CD8-positive, alpha-beta T cell (primary cell): ENCODE measurements at regions of chr12 and their contacts with region 1.

Region 1: DNA sequence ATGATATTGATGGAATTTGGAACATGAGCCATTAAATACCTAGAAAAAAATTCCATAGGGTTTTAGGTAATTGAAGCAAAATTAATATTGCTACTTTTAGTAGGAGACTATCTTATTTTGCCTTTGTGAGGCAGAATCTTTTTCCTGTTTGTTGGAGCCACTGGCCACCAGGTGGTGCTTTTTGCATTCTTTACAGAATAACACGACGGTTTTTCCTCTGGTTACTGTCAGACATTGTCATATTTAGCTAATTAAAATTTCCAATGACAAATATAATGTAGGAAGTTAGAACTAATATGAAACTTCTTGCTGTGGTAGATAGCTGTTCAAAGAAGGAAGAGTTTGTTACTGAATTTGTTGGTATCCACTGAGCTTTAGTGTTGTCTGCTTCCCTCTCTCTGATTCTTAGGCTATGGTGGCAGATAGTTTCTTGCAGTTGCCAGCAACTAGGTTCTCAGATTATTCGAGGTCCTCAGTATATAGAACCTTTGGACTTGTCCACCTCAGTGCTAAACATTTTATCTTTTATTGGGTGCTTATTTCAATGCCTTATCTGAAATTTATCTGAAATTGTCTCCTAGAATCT is 25.7 kb downstream of the RAB21 start:
- DNase-seq: peak in 8 of 9 experiments; percentile 16 to 65 (median 51)
- ATAC-seq: peak; percentile 48
- H3K4me3 ChIP-seq: no peak overlapping the region
- H3K4me3 Mint-ChIP-seq: no peak overlapping the region
- H3K27ac ChIP-seq: peak overlapping the region in 1 of 2 experiments; percentile 39
- H3K27ac Mint-ChIP-seq: peak overlapping the region; percentile 66
- H3K4me1 ChIP-seq: no peaks in the 10 kb centered on the region
- H3K4me1 Mint-ChIP-seq: peaks cover 11% of the 10 kb centered on the region
- H3K27me3 ChIP-seq: no peaks in the 10 kb centered on the region
- H3K27me3 Mint-ChIP-seq: no peaks in the 10 kb centered on the region
- CTCF ChIP-seq: peak; percentile 78

Region 2: DNA sequence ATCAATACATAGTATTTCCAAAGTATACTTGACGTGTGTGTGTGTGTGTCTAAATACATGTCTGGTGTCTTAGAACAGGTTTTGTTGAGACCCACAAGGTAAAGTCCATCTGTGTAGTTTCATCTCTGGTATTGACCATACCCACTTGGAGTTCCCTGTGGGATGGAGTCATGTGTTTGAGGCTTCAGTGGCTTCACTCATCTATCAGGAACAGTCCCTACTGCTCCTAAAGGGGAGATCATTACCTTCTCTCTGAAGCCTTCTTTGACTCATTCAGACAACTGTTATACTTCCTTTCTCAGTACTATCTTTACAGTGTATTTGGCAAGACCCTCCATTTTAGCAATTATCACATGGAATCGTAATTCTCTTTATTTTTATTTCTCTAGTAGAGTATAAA is 11.4 kb before region 1 on chr12:
- CTCF ChIA-PET with region 1: interaction called, 15 read pairs
- POLR2A ChIA-PET with region 1: no interaction called
- intact Hi-C with region 1: no loop called
- DNase-seq: no peak
- ATAC-seq: no peak
- H3K4me3 ChIP-seq: no peak overlapping the region
- H3K4me3 Mint-ChIP-seq: no peak overlapping the region
- H3K27ac ChIP-seq: no peak overlapping the region
- H3K27ac Mint-ChIP-seq: peak overlapping the region; percentile 49
- H3K4me1 ChIP-seq: peaks cover 36% of the 10 kb centered on the region
- H3K4me1 Mint-ChIP-seq: peaks cover 58% of the 10 kb centered on the region
- H3K27me3 ChIP-seq: no peaks in the 10 kb centered on the region
- H3K27me3 Mint-ChIP-seq: no peaks in the 10 kb centered on the region
- CTCF ChIP-seq: no peak

Region 3: GRCh38 chr12:71840231-71840847 is 60.0 kb after region 1 on chr12:
- CTCF ChIA-PET with region 1: interaction called, 28 read pairs
- POLR2A ChIA-PET with region 1: interaction called, 6 read pairs
- intact Hi-C with region 1: no loop called
- DNase-seq: peak in 3 of 9 experiments; percentile 8 to 39 (median 18)
- ATAC-seq: peak; percentile 21
- H3K4me3 ChIP-seq: peak overlapping the region; percentile 64 to 79
- H3K4me3 Mint-ChIP-seq: peak overlapping the region; percentile 92
- H3K27ac ChIP-seq: peak overlapping the region; percentile 93 to 98
- H3K27ac Mint-ChIP-seq: peak overlapping the region; percentile 98
- H3K4me1 ChIP-seq: peaks cover 32% of the 10 kb centered on the region
- H3K4me1 Mint-ChIP-seq: peaks cover 46% of the 10 kb centered on the region
- H3K27me3 ChIP-seq: no peaks in the 10 kb centered on the region
- H3K27me3 Mint-ChIP-seq: no peaks in the 10 kb centered on the region
- CTCF ChIP-seq: no peak

Region 4: DNA sequence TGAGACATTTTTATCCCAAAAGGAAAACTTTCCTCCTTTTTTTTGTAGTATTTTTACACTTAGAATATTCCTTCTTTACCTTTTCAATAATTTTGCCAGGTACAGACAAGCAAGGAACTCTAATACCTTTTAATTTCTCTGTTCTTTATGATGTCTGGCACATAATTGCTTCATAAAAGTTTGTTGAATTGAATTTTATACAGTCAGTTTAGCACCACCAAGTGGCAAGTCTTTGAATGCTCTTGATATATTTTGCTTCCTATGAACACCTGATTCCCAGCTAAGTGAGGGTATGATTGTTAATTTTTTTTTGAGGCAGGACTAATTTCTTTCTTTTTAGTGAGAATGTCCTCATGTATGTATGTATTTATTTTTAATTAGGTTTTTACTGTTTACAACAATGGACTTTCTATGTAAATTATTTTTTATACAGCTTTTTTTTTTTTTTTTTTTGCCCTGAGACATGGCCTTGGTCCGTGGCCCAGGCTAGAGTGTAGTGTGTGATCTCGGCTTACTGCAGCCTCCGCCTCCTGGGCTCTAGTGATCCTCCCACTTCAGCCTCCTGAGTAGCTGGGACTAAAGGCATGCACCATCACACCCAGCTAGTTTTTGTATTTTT is 66.1 kb after region 1 on chr12:
- CTCF ChIA-PET with region 1: interaction called, 28 read pairs
- POLR2A ChIA-PET with region 1: no interaction called
- intact Hi-C with region 1: loop called (anchors 1 kb)
- DNase-seq: peak in 2 of 9 experiments; percentile 51 to 64
- ATAC-seq: peak; percentile 69
- H3K4me3 ChIP-seq: no peak overlapping the region
- H3K4me3 Mint-ChIP-seq: no peak overlapping the region
- H3K27ac ChIP-seq: no peak overlapping the region
- H3K27ac Mint-ChIP-seq: no peak overlapping the region
- H3K4me1 ChIP-seq: peaks cover 11% of the 10 kb centered on the region
- H3K4me1 Mint-ChIP-seq: peaks cover 38% of the 10 kb centered on the region
- H3K27me3 ChIP-seq: no peaks in the 10 kb centered on the region
- H3K27me3 Mint-ChIP-seq: no peaks in the 10 kb centered on the region
- CTCF ChIP-seq: peak; percentile 51

Region 5: GRCh38 chr12:71900091-71900490 is 119.8 kb after region 1 on chr12:
- CTCF ChIA-PET with region 1: interaction called, 4 read pairs
- POLR2A ChIA-PET with region 1: no interaction called
- intact Hi-C with region 1: loop called in 1 of 2 experiments (anchors 10 kb)
- DNase-seq: no peak
- ATAC-seq: no peak
- H3K4me3 ChIP-seq: no peak overlapping the region
- H3K4me3 Mint-ChIP-seq: no peak overlapping the region
- H3K27ac ChIP-seq: no peak overlapping the region
- H3K27ac Mint-ChIP-seq: no peak overlapping the region
- H3K4me1 ChIP-seq: no peaks in the 10 kb centered on the region
- H3K4me1 Mint-ChIP-seq: no peaks in the 10 kb centered on the region
- H3K27me3 ChIP-seq: no peaks in the 10 kb centered on the region
- H3K27me3 Mint-ChIP-seq: no peaks in the 10 kb centered on the region
- CTCF ChIP-seq: no peak

Region 6: GRCh38 chr12:71947645-71948105 is 167.3 kb after region 1 on chr12:
- CTCF ChIA-PET with region 1: no interaction called
- POLR2A ChIA-PET with region 1: no interaction called
- intact Hi-C with region 1: no loop called
- DNase-seq: no peak
- ATAC-seq: no peak
- H3K4me3 ChIP-seq: no peak overlapping the region
- H3K4me3 Mint-ChIP-seq: no peak overlapping the region
- H3K27ac ChIP-seq: no peak overlapping the region
- H3K27ac Mint-ChIP-seq: no peak overlapping the region
- H3K4me1 ChIP-seq: no peaks in the 10 kb centered on the region
- H3K4me1 Mint-ChIP-seq: no peaks in the 10 kb centered on the region
- H3K27me3 ChIP-seq: no peaks in the 10 kb centered on the region
- H3K27me3 Mint-ChIP-seq: peaks cover 30% of the 10 kb centered on the region
- CTCF ChIP-seq: no peak